Aorta (tissue), 5 donors: ENCODE measurements at regions of chr1 and their contacts with region 1.

Region 1: DNA sequence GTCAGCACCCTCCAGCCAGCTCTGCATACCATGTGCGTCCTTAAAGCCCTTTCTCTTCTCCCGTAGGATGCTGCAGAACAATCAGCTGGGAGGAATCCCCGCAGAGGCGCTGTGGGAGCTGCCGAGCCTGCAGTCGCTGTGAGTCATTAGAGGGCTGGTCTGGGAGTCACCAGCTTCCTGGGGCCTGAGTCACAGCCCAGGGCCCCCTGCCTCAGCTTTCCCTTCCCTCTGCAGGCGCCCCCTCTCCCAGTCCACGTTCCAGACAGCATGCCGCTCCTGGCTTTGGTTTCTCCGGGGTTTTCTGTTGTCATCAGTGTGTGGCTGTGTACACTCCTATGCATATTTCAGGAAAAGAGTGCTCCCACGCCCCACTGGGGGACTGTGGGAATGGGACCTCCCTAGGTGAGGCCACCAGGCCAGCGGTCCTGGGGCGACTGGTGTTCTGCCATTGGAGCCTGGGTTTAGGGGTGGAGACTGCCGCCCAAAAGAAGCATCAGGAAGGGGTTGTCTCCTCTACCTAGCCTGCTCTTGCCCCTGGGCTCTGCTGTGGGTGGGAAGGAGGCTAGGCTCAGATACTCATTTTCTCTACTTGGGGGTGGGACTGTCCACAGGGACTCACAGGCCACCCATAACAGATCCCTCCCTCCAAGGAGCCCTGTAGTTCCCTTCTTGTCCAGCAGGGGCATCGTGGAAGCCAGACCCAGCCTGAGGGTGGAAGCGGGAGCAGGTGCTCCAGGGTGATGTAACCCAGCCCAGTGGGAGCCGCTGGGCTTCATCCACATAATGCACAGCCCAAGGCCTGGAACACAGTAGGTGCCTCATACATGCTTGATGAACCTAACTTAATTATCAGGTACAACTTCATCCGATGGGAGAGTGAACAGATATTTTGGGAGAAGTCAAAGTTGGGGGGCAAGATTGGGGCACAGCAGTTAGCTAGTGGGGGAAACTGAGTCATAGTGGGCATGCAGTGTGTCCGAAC is 42.5 kb downstream of the LGR6 start:
- DNase-seq: peak; percentile 86 to 92
- ATAC-seq: peak; percentile 87
- H3K4me3 ChIP-seq: no peak overlapping the region
- H3K27ac ChIP-seq: peak overlapping the region; percentile 95 to 96
- H3K4me1 ChIP-seq: no peaks in the 10 kb centered on the region
- H3K27me3 ChIP-seq: no peaks in the 10 kb centered on the region

Region 2: GRCh38 chr1:202192770-202193613 is 43.2 kb before region 1 on chr1:
- intact Hi-C with region 1: loop called (anchors 2 to 5 kb)
- DNase-seq: peak; percentile 67 to 90
- ATAC-seq: peak; percentile 79
- H3K4me3 ChIP-seq: peak overlapping the region; percentile 64 to 89
- H3K27ac ChIP-seq: peak overlapping the region in 1 of 2 donors; percentile 84
- H3K4me1 ChIP-seq: no peaks in the 10 kb centered on the region
- H3K27me3 ChIP-seq: no peaks in the 10 kb centered on the region

Region 3: DNA sequence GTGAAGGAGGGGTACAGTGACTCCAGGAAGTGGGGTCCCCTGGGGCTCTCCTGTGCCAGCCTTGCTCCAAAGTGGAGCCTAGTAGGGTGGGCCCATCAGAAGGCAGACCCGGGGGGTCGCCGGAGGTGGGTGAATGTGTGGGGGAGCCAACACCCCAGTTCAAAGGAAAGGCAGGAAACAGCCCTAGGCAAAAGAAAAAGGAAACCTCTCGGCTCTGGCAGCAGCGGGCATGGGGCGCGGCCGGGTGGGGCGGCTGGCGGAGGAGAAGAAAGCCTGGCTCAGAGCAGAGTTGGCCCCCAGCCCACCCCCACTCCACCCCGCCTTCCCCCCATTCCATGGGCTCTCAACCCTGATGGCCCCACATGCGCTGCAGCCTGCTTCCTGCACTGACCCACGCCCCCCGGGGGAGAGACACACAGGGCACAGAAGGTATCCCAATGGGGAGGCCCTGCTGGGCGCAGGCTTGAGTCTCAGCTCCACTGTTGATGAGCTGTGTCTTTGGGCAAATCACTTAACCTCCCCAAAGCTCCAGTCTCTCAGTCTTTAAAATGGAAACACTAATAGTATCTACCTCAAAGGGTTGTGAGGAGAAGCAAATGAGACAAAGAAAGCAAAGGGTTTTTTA is 36.8 kb before region 1 on chr1:
- intact Hi-C with region 1: loop called in 1 of 2 experiments (anchors 5 kb)
- DNase-seq: no peak
- ATAC-seq: peak; percentile 24
- H3K4me3 ChIP-seq: no peak overlapping the region
- H3K27ac ChIP-seq: peak overlapping the region; percentile 85 to 92
- H3K4me1 ChIP-seq: peaks cover 4% of the 10 kb centered on the region in 2 donors
- H3K27me3 ChIP-seq: no peaks in the 10 kb centered on the region

Region 4: DNA sequence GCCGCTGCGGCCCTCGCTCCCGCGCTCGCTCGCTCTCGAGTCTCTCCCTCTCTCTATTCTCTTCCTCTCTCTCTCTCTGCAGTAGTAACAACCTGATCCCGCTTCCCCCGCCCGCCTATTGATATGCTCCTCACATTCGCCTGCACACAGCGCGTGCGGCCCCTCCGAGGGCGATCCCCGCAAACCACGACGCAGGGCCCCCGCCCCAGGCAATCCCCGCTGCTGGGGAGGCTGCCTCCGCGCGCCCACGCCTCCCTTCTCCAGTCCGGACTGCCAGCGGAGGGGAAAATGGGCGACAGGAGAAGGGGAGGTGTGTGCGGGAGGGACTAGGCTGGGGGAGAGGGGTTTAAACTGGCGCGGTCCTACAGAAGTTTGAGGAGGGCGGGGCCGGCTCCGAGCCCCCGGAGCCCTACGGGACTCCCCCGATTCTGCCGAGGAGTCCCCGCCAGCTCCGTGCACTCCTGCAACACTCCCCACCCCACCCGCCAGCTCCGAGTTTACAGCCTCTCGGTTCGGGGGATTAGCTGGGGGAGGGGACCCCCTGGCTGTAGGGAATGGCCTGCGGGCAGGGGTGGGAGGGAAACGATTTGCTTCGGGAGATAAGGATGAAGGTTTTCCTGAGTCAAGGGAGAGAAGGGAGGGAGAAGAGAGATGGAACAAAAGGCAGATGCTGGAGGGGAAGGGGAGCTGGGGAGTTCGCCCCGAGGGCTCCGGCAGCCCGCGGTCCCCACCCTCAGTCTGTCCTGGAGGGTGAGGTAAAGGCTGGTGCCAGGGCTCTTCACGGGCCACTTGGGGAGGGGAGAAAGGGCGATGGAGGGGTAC is 407.5 kb after region 1 on chr1:
- intact Hi-C with region 1: no loop called
- DNase-seq: no peak
- ATAC-seq: no peak
- H3K4me3 ChIP-seq: peak overlapping the region in 1 of 2 donors; percentile 23
- H3K27ac ChIP-seq: no peak overlapping the region
- H3K4me1 ChIP-seq: no peaks in the 10 kb centered on the region
- H3K27me3 ChIP-seq: no peaks in the 10 kb centered on the region